H1 (cell line): ENCODE measurements at regions of chr7 and their contacts with region 1.

Region 1: DNA sequence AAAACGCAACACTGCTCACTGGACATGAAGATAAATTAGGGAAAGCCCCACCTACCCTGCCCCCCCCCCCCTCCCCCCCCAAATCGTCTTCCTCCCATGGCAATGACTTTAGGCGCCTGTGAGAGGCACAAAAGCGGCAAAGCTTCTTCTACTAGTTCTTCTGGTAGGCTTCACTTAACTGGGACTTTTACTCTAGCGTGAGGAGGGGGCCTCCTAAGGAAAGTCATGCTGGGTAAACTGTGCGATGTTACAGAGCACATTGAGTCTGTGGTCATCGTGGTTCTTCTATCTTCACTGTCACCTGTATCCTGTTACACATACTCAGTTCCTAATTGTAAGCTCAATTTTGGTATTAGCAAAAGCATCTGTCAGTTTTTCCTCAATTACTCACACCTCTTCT is 25.1 kb downstream of the HSPB1 start:
- DNase-seq: no peak
- H3K4me3 ChIP-seq: no peak overlapping the region
- H3K27ac ChIP-seq: no peak overlapping the region
- H3K4me1 ChIP-seq: peaks cover 0 to 2% (median 0%) of the 10 kb centered on the region in 4 experiments; a peak in 1 of 7 replicates
- H3K27me3 ChIP-seq: no peaks in the 10 kb centered on the region
- CTCF ChIP-seq: no peak
- EP300 ChIP-seq: no peak
- POLR2A ChIP-seq: no peak
- RAD21 ChIP-seq: no peak

Region 2: GRCh38 chr7:76285604-76286374 is 41.8 kb before region 1 on chr7:
- CTCF ChIA-PET with region 1: no interaction called
- POLR2A ChIA-PET with region 1: no interaction called
- DNase-seq: no peak
- H3K4me3 ChIP-seq: no peak overlapping the region
- H3K27ac ChIP-seq: no peak overlapping the region
- H3K4me1 ChIP-seq: peaks cover 0 to 11% (median 6%) of the 10 kb centered on the region in 4 experiments; a peak in 5 of 7 replicates
- H3K27me3 ChIP-seq: peaks cover 8 to 14% (median 11%) of the 10 kb centered on the region in 4 experiments; a peak in 6 of 7 replicates
- CTCF ChIP-seq: no peak
- EP300 ChIP-seq: no peak
- POLR2A ChIP-seq: no peak
- RAD21 ChIP-seq: no peak

Region 3: DNA sequence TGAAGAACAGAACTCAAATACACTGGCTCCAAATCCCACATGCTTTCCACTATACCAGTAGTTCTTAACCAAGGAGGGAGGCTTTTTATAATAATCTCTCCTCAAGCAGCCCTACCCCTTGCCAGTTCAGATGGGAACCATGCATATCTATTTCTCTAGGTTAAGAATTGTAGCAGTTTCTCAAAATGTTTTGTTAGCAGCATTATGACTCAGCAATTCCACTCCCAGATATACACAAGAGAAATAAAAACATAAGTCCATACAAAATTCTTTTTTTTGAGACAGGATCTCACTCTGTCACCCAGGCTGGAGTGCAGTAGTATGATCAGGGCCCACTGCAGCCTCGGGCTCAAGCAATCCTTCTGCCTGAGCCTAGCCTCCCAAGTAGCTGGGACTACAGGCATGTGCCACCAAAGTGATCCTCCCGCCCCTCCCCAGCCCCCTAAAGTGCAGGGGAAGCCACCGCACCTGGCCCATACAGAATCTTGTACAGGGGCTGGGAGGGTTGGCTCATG is 13.1 kb after region 1 on chr7:
- CTCF ChIA-PET with region 1: interaction called, 5 read pairs
- POLR2A ChIA-PET with region 1: interaction called, 33 read pairs
- DNase-seq: no peak
- H3K4me3 ChIP-seq: no peak overlapping the region
- H3K27ac ChIP-seq: no peak overlapping the region
- H3K4me1 ChIP-seq: peaks cover 0 to 4% (median 1%) of the 10 kb centered on the region in 4 experiments; a peak in 1 of 7 replicates
- H3K27me3 ChIP-seq: no peaks in the 10 kb centered on the region
- CTCF ChIP-seq: no peak
- EP300 ChIP-seq: no peak
- POLR2A ChIP-seq: no peak
- RAD21 ChIP-seq: no peak

Region 4: GRCh38 chr7:76352193-76352592 is 24.6 kb after region 1 on chr7:
- CTCF ChIA-PET with region 1: interaction called, 4 read pairs
- POLR2A ChIA-PET with region 1: interaction called, 249 read pairs
- DNase-seq: no peak
- H3K4me3 ChIP-seq: no peak overlapping the region
- H3K27ac ChIP-seq: no peak overlapping the region
- H3K4me1 ChIP-seq: peaks cover 0 to 3% (median 1%) of the 10 kb centered on the region in 4 experiments; a peak in 3 of 7 replicates
- H3K27me3 ChIP-seq: no peaks in the 10 kb centered on the region
- CTCF ChIP-seq: no peak
- EP300 ChIP-seq: no peak
- POLR2A ChIP-seq: no peak
- RAD21 ChIP-seq: no peak